ENCODE measurements at regions of chr11 and their contacts with region 1.

Region 1: DNA sequence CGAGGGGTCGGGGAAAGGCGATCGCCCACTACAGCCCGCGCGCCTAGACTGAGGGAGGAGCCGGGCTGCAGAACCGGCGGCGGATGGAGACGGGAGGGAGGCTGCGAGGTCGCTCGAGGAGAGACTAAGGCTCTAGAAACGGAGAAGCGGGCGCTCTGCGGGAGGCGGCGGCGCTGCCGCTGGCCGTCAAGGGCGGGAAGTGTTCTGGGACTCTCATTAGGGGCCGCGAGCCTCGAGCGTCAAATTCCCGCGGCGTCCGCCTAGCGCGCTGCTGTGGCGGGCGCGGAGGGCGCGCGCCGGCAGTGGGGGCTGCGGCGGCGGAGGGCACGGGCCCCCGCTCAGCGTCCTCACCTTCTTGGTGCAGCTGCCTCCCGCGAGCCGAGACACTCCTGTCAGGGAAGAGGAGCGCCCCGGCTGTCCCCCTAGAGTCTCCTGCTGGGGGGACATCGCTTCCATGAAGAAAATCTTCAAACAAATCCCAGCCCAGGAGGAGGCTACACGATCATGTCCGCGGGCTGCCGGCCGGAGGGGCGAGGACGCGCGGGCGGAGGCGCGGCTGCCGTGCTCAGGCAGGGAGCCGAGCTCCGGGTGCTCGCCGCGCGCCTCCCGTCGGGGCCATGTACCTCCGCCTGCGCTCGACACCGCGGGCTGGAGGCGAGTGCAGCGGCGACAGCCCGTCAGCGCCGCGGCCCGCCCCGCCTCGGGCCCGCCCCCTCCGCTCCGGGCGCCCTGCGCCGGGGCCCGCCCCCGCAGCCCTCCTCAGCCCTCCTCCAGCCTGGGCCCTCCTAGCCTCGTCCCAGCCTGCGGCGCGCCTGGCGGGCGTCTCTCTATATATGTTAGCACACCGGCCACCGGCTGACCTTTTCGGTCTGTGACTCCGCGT is at the start of gene ARHGAP20:
- DNase-seq: peak; percentile 77
- ATAC-seq: peak; percentile 91
- H3K4me3 Mint-ChIP-seq: peak within 1 kb of the TSS; percentile 62
- H3K27ac Mint-ChIP-seq: no peak within 1 kb of the TSS
- H3K4me1 Mint-ChIP-seq: peaks cover 11% of the 10 kb centered on the region
- H3K27me3 Mint-ChIP-seq: peaks cover 57% of the 10 kb centered on the region
- total RNA-seq, gene ARHGAP20: 0.43 to 0.46 TPM

Region 2: DNA sequence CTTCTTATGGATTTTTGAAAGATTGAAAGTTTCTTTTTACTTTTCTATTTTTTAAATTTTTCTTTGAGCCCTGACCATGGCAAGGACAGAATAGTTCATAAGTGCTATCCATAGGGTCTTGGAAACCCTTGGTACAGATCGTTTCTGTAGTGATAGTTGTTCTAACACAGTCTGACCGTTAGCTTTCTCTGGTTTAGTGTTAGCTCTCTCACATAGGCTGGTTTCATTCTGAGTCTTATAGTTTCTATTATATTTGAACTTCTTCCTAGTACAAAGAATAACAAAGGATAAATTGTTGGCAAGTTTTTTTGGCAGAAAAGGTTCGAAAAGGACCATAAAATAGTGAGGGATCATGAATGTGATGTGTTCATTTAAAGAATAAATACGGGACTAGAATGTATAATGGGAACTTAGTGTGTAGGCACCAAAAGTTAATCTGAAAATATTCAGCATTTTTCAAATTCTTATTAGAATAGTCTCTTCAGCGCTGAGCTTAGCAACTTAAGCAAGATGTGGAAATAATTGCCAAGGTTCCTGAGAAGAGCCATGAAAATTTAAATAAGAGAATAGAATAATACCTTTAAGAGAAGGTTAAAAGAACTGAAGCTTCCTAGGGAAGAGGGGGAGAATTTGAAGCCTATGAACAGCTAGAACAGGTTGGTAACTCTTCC is 258.2 kb before region 1 on chr11:
- CTCF ChIA-PET with region 1: no interaction called
- POLR2A ChIA-PET with region 1: no interaction called
- intact Hi-C with region 1: loop called in 1 of 2 experiments (anchors 5 kb)
- DNase-seq: no peak
- ATAC-seq: peak; percentile 58
- H3K4me3 Mint-ChIP-seq: no peak overlapping the region
- H3K27ac Mint-ChIP-seq: no peak overlapping the region
- H3K4me1 Mint-ChIP-seq: peaks cover 38% of the 10 kb centered on the region
- H3K27me3 Mint-ChIP-seq: no peaks in the 10 kb centered on the region

Measured in activated CD4-positive, alpha-beta T cell treated with anti-CD3 and anti-CD28 coated beads for 36 hours (primary cell).